PC-9 (cell line): ENCODE measurements at regions of chr3 and their contacts with region 1.

Region 1: DNA sequence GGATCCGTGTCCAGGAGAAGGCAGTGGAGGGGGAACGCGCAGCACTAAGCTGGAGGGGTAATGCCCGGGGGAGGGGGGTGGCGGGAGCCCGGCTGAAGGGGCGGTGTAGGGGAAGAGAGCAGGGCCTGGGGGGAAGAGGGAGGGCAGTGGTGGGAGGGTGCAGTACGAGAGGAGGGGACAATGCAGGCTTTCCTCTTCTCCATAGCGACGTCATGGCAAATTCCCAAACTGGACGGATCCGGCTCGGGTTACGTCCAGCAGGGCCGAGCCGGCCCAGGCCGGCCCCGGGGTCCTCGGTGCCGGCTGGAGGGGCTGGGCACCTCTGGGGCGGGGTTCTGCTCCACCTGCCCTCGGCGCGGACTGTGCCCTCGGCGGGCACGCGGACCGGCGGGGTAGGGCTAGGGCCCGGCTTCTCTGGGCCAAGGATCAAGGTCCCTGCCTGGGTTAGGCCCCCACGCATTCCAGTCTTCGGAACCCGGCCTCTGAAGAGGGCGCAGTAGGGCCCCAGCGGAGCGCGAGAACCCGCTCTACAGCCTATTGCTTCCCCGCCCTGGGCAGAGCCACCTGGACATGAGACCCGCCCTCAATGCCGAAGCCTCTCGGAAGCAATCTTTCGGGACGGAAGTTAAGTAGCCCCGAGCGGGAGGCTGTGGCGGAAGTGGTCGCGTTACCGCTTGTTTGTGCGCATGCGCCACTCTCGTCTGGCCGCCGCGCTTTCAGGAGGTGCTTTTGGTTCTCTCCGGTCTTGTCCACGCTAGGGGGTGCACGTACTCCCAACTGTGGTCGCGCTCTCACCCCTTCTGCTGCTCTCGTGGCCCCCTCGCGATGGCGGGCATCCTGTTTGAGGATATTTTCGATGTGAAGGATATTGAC is 1.4 kb downstream of the POLR2H start:
- DNase-seq: peak; percentile 99
- H3K4me3 ChIP-seq: peak overlapping the region; percentile 85
- H3K27ac ChIP-seq: peak overlapping the region; percentile 95
- H3K4me1 ChIP-seq: peaks cover 22% of the 10 kb centered on the region
- H3K27me3 ChIP-seq: no peaks in the 10 kb centered on the region
- CTCF ChIP-seq: peak; percentile 73

Region 2: DNA sequence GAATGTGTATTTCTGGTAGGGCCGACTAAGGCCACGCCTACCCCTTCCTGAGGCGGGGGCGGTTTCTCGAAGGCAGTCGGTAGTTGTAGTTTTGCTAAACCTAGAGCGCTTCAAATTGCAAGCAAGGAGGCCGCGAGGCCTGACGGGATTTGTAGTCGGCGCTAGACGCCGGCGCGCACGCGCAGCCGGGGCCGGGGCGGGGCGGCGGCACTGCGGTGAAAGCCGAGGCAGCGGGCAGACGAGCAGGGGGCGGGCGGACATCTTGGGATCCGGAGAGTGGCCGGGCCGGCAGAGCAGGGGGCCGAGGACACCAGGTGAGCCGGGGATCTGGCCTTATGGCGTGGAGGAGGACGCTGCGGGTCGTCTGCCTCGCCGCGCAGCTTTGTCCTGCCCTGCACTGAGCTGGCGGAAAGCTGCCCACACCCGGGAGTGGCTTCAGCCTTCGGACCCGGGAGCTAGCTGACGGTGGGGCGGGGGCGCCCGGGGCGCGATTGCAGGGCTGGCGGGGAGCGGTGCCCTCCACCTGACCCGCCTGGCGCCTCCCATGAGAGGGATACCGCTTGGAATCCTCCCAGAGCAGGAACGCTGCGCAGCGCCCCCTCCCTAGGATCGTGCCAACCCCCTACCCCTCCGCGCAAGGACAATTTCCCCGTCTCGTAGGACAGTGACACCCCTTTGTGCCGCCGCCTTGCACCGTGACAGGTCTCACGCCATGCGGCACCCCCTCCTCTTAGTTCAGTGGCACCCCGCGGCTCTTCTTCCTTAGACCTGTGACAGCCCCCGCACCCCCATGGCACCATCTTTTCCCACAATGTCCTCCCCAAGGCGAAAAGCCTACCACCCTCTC is 188.0 kb before region 1 on chr3 and contains the start of gene AP2M1:
- CTCF ChIA-PET with region 1: no interaction called
- POLR2A ChIA-PET with region 1: no interaction called
- intact Hi-C with region 1: loop called (anchors 5 kb)
- DNase-seq: peak; percentile 99 to 100
- H3K4me3 ChIP-seq: peak within 1 kb of the TSS; percentile 91
- H3K27ac ChIP-seq: peak within 1 kb of the TSS; percentile 32
- H3K4me1 ChIP-seq: peaks cover 20% of the 10 kb centered on the region
- H3K27me3 ChIP-seq: no peaks in the 10 kb centered on the region
- CTCF ChIP-seq: no peak
- total RNA-seq, gene AP2M1: 586 and 606 TPM in 2 replicates

Region 3: GRCh38 chr3:184298759-184299496 is 64.0 kb before region 1 on chr3 and contains the start of gene PSMD2:
- CTCF ChIA-PET with region 1: no interaction called
- POLR2A ChIA-PET with region 1: interaction called, 4 read pairs
- intact Hi-C with region 1: loop called (anchors 1 kb)
- DNase-seq: peak; percentile 92 to 99
- H3K4me3 ChIP-seq: peak within 1 kb of the TSS; percentile 100
- H3K27ac ChIP-seq: peak within 1 kb of the TSS; percentile 57
- H3K4me1 ChIP-seq: peaks cover 15% of the 10 kb centered on the region
- H3K27me3 ChIP-seq: no peaks in the 10 kb centered on the region
- CTCF ChIP-seq: no peak
- total RNA-seq, gene PSMD2: 521 and 788 TPM in 2 replicates

Region 4: GRCh38 chr3:184320099-184320445 is 42.8 kb before region 1 on chr3:
- CTCF ChIA-PET with region 1: no interaction called
- POLR2A ChIA-PET with region 1: interaction called, 18 read pairs
- intact Hi-C with region 1: loop called (anchors 1 kb)
- DNase-seq: peak; percentile 87 to 97
- H3K4me3 ChIP-seq: peak overlapping the region; percentile 18; the same call in 1 of the 2 replicates
- H3K27ac ChIP-seq: peak overlapping the region; percentile 51
- H3K4me1 ChIP-seq: peaks cover 50% of the 10 kb centered on the region
- H3K27me3 ChIP-seq: no peaks in the 10 kb centered on the region
- CTCF ChIP-seq: no peak

Region 5: GRCh38 chr3:184345317-184346144 is 17.4 kb before region 1 on chr3:
- CTCF ChIA-PET with region 1: interaction called, 3 read pairs
- POLR2A ChIA-PET with region 1: no interaction called
- intact Hi-C with region 1: loop called (anchors 1 kb)
- DNase-seq: peak; percentile 83
- H3K4me3 ChIP-seq: no peak overlapping the region
- H3K27ac ChIP-seq: no peak overlapping the region
- H3K4me1 ChIP-seq: peaks cover 8% of the 10 kb centered on the region; the same call in 1 of the 2 replicates
- H3K27me3 ChIP-seq: no peaks in the 10 kb centered on the region
- CTCF ChIP-seq: peak; percentile 86

Region 6: GRCh38 chr3:184448311-184449160 is 85.6 kb after region 1 on chr3:
- CTCF ChIA-PET with region 1: no interaction called
- POLR2A ChIA-PET with region 1: interaction called, 36 read pairs
- intact Hi-C with region 1: no loop called
- DNase-seq: peak; percentile 90 to 100
- H3K4me3 ChIP-seq: no peak overlapping the region
- H3K27ac ChIP-seq: peak overlapping the region; percentile 79
- H3K4me1 ChIP-seq: peaks cover 43% of the 10 kb centered on the region
- H3K27me3 ChIP-seq: no peaks in the 10 kb centered on the region
- CTCF ChIP-seq: no peak